Activated CD4-positive, alpha-beta T cell treated with anti-CD3 and anti-CD28 coated beads for 36 hours (primary cell): ENCODE measurements at regions of chr17 and their contacts with region 1.

Region 1: GRCh38 chr17:48724251-48725003 is 1.4 kb downstream of the PRAC2 start:
- DNase-seq: peak; percentile 91
- ATAC-seq: peak; percentile 78
- H3K4me3 Mint-ChIP-seq: peak overlapping the region; percentile 42
- H3K27ac Mint-ChIP-seq: peak overlapping the region; percentile 55
- H3K4me1 Mint-ChIP-seq: peaks cover 32% of the 10 kb centered on the region
- H3K27me3 Mint-ChIP-seq: peaks cover 81% of the 10 kb centered on the region

Region 2: GRCh38 chr17:48322060-48322459 is 402.4 kb before region 1 on chr17:
- CTCF ChIA-PET with region 1: no interaction called
- POLR2A ChIA-PET with region 1: no interaction called
- intact Hi-C with region 1: no loop called
- DNase-seq: no peak
- ATAC-seq: no peak
- H3K4me3 Mint-ChIP-seq: no peak overlapping the region
- H3K27ac Mint-ChIP-seq: no peak overlapping the region
- H3K4me1 Mint-ChIP-seq: peaks cover 6% of the 10 kb centered on the region
- H3K27me3 Mint-ChIP-seq: no peaks in the 10 kb centered on the region

Region 3: GRCh38 chr17:48610282-48611211 is 113.9 kb before region 1 on chr17 and contains the start of gene HOXB7:
- CTCF ChIA-PET with region 1: interaction called, 9 read pairs
- POLR2A ChIA-PET with region 1: no interaction called
- intact Hi-C with region 1: loop called in 1 of 2 experiments (anchors 5 kb)
- DNase-seq: peak; percentile 83
- ATAC-seq: peak; percentile 40
- H3K4me3 Mint-ChIP-seq: peak within 1 kb of the TSS; percentile 82
- H3K27ac Mint-ChIP-seq: peak within 1 kb of the TSS; percentile 58
- H3K4me1 Mint-ChIP-seq: peaks cover 37% of the 10 kb centered on the region
- H3K27me3 Mint-ChIP-seq: peaks cover 63% of the 10 kb centered on the region
- total RNA-seq, gene HOXB7: 0.25 to 0.30 TPM

Region 4: DNA sequence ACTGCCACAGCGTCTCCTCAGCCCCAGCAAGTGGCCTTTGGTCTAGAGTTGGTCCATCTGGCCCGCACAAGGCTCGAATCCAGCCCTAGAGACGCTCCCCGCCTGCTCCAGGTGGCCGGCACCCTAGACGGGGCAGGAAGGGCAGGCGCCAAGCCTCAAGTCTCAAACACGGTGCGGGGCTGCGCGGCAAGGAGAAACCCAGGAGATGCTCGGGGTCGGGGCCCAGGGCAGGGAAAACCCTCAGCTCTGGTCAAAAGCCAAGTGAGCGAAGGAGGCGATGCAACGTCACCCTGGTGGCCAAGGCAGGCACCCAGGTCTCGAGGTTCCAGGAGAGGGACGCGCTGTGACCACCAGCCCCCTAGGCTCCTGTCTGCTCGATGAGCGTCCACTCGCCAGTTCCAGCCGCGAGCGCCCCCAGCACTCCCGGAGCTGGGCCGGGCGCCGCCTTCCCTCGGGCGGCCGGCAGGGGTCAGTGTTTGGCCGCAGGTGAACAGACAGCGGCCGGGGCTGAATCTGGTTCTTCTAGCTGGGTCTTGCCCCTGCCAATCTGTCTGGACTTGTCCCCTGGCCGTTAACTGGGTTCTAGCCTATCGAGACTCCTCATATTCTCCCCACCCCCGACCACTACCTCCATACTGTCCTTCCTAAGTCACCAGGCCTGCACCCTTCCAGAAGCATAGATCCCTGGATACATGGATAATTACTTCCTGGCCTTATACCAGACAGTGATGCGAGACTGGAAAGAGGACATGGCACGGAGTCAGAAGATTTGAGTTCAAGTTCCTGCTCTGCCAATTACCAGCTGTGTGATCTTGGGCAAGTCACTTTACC is 46.1 kb before region 1 on chr17:
- CTCF ChIA-PET with region 1: interaction called, 40 read pairs
- POLR2A ChIA-PET with region 1: no interaction called
- intact Hi-C with region 1: loop called (anchors 2 to 5 kb)
- DNase-seq: peak; percentile 84
- ATAC-seq: peak; percentile 92
- H3K4me3 Mint-ChIP-seq: no peak overlapping the region
- H3K27ac Mint-ChIP-seq: no peak overlapping the region
- H3K4me1 Mint-ChIP-seq: no peaks in the 10 kb centered on the region
- H3K27me3 Mint-ChIP-seq: peaks cover 34% of the 10 kb centered on the region

Region 5: GRCh38 chr17:48753794-48754499 is 29.5 kb after region 1 on chr17:
- CTCF ChIA-PET with region 1: interaction called, 14 read pairs
- POLR2A ChIA-PET with region 1: no interaction called
- intact Hi-C with region 1: loop called in 1 of 2 experiments (anchors 2 kb)
- DNase-seq: no peak
- ATAC-seq: no peak
- H3K4me3 Mint-ChIP-seq: no peak overlapping the region
- H3K27ac Mint-ChIP-seq: no peak overlapping the region
- H3K4me1 Mint-ChIP-seq: peaks cover 8% of the 10 kb centered on the region
- H3K27me3 Mint-ChIP-seq: peaks cover 72% of the 10 kb centered on the region

Region 6: DNA sequence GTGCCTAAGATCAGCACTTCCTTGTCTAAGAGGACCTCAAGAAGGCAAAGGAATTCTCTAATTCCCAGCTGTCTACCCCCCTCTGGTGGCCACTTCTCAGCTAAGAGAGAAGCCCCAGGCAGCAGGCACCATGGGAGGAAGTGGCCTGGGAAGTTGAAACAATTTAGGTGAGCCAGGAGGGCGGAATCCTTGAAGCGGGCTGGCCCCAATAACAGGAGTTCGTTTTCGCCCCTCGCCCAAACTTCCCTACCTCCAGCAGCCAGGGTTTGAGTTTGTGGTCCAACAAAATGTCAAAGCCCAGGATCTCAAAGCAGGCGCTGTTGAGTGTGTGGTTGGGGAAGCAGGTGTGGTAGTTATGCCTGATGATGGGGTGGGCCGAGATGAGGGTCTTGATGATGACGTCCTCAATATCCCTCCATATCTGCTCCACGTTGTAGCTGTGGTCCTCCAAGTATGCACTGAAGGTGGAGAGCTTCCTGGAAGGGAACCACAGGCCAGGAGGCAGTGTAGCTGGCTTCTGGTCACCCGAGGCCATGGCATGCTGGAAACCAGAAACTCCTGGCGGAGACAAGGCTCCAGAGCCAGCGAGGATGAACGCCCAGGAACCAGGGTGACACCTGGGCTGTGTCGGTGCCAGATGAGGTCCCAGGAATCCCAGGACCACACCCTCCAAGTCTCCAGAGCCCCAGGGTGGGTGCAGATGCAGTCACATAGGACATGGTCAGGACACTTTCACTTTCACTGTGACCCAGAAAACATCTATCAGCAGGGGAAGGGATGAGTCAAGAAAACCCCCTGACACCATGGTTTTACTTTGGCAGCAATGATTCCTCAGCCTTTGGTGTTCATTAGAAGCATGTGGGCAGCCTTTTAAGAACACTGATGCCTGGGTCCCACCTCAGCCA is 67.0 kb after region 1 on chr17:
- CTCF ChIA-PET with region 1: interaction called, 6 read pairs
- POLR2A ChIA-PET with region 1: no interaction called
- intact Hi-C with region 1: loop called (anchors 2 kb)
- DNase-seq: peak; percentile 46
- ATAC-seq: peak; percentile 84
- H3K4me3 Mint-ChIP-seq: no peak overlapping the region
- H3K27ac Mint-ChIP-seq: no peak overlapping the region
- H3K4me1 Mint-ChIP-seq: no peaks in the 10 kb centered on the region
- H3K27me3 Mint-ChIP-seq: peaks cover 30% of the 10 kb centered on the region

Region 7: DNA sequence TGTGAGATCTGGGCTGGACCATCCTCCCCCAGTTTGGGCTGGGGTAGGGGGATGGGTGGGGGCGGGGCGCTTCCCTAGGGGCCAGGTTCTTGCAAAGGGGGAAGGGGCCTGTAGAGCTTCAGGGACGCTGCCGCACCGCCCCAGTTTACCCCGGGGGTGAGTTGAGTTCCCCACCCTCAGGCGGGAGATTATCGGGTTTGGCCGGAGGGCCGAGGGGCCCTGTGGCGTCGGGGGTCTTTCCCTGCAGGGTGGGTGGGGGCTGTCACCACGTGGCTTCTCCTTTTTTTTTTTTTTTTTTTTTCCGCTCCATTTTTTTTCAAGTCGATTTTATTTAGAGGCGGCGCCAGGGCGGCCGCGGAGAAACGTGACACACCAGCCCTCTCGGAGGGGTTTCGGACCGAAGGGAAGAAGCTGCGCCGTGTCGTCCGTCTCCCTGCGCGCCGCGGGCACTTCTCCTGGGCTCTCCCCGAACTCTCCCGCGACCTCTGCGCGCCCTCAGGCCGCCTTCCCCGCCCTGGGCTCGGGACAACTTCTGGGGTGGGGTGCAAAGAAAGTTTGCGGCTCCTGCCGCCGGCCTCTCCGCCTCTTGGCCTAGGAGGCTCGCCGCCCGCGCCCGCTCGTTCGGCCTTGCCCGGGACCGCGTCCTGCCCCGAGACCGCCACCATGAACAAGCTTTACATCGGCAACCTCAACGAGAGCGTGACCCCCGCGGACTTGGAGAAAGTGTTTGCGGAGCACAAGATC is 272.8 kb after region 1 on chr17 and contains the start of gene IGF2BP1:
- CTCF ChIA-PET with region 1: interaction called, 3 read pairs
- POLR2A ChIA-PET with region 1: no interaction called
- intact Hi-C with region 1: loop called (anchors 5 kb)
- DNase-seq: peak; percentile 51
- ATAC-seq: peak; percentile 36
- H3K4me3 Mint-ChIP-seq: peak within 1 kb of the TSS; percentile 64
- H3K27ac Mint-ChIP-seq: no peak within 1 kb of the TSS
- H3K4me1 Mint-ChIP-seq: peaks cover 25% of the 10 kb centered on the region
- H3K27me3 Mint-ChIP-seq: peaks cover 75% of the 10 kb centered on the region
- total RNA-seq, gene IGF2BP1: 0.43 to 0.97 TPM